Aorta (tissue), 5 donors: ENCODE measurements at regions of chr20 and their contacts with region 1.

Region 1: GRCh38 chr20:23441850-23442313 is 2.4 kb downstream of the CSTL1 start:
- DNase-seq: peak; percentile 69 to 79
- ATAC-seq: peak; percentile 74
- H3K4me3 ChIP-seq: no peak overlapping the region
- H3K27ac ChIP-seq: no peak overlapping the region
- H3K4me1 ChIP-seq: no peaks in the 10 kb centered on the region
- H3K27me3 ChIP-seq: no peaks in the 10 kb centered on the region

Region 2: DNA sequence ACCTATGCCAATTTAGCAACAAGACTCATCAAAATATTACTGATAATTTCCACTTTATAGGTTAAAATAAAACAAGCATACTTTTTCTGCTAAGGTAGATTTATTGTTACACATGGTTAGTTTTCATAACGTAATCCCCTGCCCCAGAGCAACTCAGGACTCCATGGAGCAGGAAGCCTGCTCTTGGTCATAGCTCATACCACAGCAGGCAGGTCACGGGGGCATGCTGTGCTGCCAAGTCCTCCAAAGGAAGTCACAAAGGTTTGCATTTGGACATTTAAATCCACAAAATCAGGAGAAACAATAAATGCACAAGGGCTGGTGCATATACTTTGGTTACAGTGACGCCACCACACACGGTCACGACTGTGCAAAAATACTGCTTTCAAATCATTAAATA is 67.4 kb before region 1 on chr20:
- intact Hi-C with region 1: no loop called
- DNase-seq: no peak
- ATAC-seq: no peak
- H3K4me3 ChIP-seq: no peak overlapping the region
- H3K27ac ChIP-seq: no peak overlapping the region
- H3K4me1 ChIP-seq: peaks cover 0 to 2% of the 10 kb centered on the region in 2 donors
- H3K27me3 ChIP-seq: no peaks in the 10 kb centered on the region

Region 3: GRCh38 chr20:23530937-23531567 is 89.2 kb after region 1 on chr20:
- intact Hi-C with region 1: no loop called
- DNase-seq: no peak
- ATAC-seq: no peak
- H3K4me3 ChIP-seq: no peak overlapping the region
- H3K27ac ChIP-seq: no peak overlapping the region
- H3K4me1 ChIP-seq: no peaks in the 10 kb centered on the region
- H3K27me3 ChIP-seq: no peaks in the 10 kb centered on the region

Region 4: GRCh38 chr20:23606652-23607049 is 164.8 kb after region 1 on chr20:
- intact Hi-C with region 1: loop called (anchors 5 to 10 kb)
- DNase-seq: peak; percentile 86 to 94
- ATAC-seq: peak; percentile 86
- H3K4me3 ChIP-seq: no peak overlapping the region
- H3K27ac ChIP-seq: no peak overlapping the region
- H3K4me1 ChIP-seq: no peaks in the 10 kb centered on the region
- H3K27me3 ChIP-seq: no peaks in the 10 kb centered on the region

Region 5: DNA sequence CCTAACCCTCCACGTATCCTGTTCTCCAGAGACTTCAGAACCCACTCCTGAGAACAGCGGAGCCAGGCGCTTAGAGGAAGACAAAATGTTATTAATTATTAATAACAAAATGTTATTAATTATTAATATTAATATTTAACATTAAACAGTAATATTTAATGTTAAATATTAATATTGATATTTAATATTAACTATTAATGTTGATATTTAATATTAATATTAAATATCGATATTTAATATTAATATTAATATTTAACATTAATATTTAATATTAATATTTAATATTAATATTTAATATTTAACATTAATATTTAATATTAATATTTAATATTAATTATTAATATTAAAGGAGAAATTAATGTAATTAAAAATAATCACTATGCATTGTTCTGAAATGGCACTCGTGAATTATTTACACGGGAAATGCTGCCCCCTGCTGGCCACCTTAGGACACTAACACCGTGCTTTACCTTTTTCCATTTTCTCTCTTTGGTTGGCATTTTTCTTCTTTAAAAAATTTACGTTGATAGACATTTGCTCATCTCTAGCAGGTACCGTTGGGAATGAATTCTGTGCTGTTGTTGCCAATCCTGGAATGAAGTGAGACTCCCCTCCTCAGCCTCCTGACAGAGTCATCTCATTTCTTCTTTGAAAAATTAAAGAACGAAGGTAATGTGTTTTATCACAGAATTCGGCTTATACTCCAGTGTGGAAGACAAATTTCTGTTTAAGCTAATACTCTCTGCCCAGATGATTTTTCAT is 554.2 kb after region 1 on chr20:
- intact Hi-C with region 1: loop called (anchors 5 kb)
- DNase-seq: peak; percentile 64 to 86
- ATAC-seq: no peak
- H3K4me3 ChIP-seq: no peak overlapping the region
- H3K27ac ChIP-seq: no peak overlapping the region
- H3K4me1 ChIP-seq: no peaks in the 10 kb centered on the region
- H3K27me3 ChIP-seq: no peaks in the 10 kb centered on the region